ENCODE measurements at regions of chr15 and their contacts with region 1.

Region 1: DNA sequence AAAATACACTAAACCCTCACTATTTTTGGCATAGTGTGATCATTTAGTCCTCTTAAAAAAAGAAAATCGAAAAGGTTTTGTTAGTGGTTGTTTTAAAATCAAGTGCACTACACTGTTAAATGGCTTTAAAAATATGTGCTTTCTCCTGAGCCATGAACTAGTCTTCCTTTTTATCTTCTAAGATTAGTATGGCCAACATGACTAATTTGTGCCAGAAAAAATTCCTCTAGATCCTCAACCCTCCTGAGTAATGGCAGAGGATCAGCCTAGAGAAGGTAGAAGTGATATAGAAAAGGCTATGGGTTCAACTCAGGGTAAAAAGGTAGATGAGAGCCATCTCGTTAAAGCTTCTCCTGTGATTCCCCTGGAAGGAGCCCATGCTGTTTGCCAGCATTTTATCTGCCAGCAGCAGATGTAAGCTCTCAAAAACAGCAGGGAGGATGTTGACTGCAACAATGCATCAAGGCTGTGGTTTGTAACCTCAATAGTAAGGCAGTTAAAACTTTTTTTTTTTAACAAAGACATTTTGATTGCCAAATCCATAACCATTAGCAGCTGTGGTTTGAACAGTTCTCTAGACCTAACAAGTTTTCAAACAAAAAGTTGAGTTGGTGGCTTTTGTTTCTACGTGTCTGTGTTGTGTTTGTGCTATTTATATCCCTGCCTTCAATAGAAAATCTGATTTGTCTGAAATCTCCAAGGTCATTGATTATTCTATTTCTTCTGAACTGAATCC is 30.2 kb upstream of the ZNF609 start:
- DNase-seq: peak in 9 of 10 donors; percentile 23 to 87 (median 68)
- ATAC-seq: peak; percentile 84 to 96
- H3K4me3 Mint-ChIP-seq: peak overlapping the region; percentile 34 to 86 (median 72)
- H3K27ac Mint-ChIP-seq: peak overlapping the region; percentile 67 to 97 (median 93)
- H3K4me1 Mint-ChIP-seq: peaks cover 25 to 52% (median 47%) of the 10 kb centered on the region in 4 donors
- H3K27me3 Mint-ChIP-seq: no peaks in the 10 kb centered on the region

Region 2: DNA sequence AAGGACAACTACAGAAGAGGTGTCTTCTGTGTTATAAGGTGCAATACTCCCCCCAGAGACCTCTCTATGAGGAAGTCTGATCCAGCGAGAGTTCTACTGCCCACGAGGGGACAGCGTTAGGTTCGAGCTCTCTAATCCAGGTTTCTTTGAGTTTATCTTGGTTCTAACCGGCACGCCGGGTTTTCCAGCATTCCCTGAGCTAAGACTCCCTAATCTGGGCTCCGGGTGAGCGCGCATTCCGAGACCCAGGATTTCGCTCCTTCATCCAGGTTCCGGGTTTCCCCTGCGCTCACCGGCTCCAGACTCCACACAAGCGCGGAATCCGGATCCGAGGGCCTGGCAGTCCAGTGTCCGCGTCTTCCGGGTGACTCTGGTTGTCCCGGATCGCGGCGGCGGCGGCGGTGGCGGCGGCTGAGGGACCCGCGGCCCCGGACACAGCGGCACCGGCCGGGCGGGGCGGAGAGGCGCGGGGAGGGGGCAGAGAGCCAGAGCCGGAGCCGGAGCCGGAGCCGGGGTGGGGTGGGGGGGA is 30.1 kb after region 1 on chr15 and contains the start of gene ZNF609:
- POLR2A ChIA-PET with region 1: interaction called, 16 read pairs
- DNase-seq: peak; percentile 73 to 93 (median 86)
- ATAC-seq: peak; percentile 65 to 70
- H3K4me3 Mint-ChIP-seq: peak within 1 kb of the TSS; percentile 81 to 97 (median 94)
- H3K27ac Mint-ChIP-seq: peak within 1 kb of the TSS; percentile 76 to 97 (median 94)
- H3K4me1 Mint-ChIP-seq: peaks cover 50 to 88% (median 85%) of the 10 kb centered on the region in 4 donors
- H3K27me3 Mint-ChIP-seq: no peaks in the 10 kb centered on the region
- polyA plus RNA-seq, gene ZNF609: 10.2 to 23.7 (median 13.5) TPM

Region 3: GRCh38 chr15:64544450-64544849 is 114.3 kb after region 1 on chr15:
- POLR2A ChIA-PET with region 1: no interaction called
- DNase-seq: no peak
- ATAC-seq: no peak
- H3K4me3 Mint-ChIP-seq: peak overlapping the region in 4 of 10 donors; percentile 8 to 36 (median 16)
- H3K27ac Mint-ChIP-seq: peak overlapping the region in 7 of 10 donors; percentile 36 to 85 (median 72)
- H3K4me1 Mint-ChIP-seq: peaks cover 34 to 77% (median 66%) of the 10 kb centered on the region in 4 donors
- H3K27me3 Mint-ChIP-seq: no peaks in the 10 kb centered on the region